ENCODE measurements at regions of chr5 and their contacts with region 1.

Region 1: DNA sequence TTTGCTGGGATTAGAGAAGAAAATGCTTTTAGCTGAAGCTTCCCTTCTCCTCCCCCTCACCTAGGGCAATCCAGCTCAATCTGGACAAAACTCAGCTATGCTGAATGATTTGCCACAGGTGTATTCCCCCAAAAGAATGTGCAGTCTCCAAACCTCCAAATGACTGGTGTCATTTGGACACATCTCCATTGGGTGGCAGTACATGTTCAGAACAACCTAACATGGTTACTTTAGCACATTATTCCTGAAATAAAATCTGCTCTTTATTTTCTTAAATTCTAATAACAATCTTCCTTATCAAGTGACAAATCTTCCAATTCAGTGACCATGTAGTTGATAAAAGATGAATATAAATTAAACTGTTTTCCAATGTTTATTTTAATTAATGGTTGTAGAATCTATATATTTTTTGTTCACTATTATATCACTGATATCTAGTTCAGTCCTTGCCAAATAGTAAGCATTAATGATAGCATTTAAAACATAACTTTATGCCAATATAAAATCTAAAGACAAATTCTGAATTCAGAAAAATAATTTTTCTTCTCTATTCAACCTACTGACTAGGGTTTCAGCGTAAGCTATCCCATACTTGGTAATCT is 61.3 kb upstream of the MOCS2 start:
- DNase-seq: peak; percentile 69
- ATAC-seq: peak; percentile 92
- H3K4me3 ChIP-seq: no peak overlapping the region
- H3K27ac ChIP-seq: 0 out of 2 replicates have a peak overlapping the region, but pooled peaks have one; percentile 9
- H3K4me1 ChIP-seq: peaks cover 9% of the 10 kb centered on the region
- H3K27me3 ChIP-seq: no peaks in the 10 kb centered on the region
- CTCF ChIP-seq: peak; percentile 83

Region 2: GRCh38 chr5:52560366-52560765 is 610.5 kb before region 1 on chr5:
- CTCF ChIA-PET with region 1: no interaction called
- POLR2A ChIA-PET with region 1: no interaction called
- intact Hi-C with region 1: loop called (anchors 1 kb)
- DNase-seq: peak; percentile 56
- ATAC-seq: peak; percentile 76
- H3K4me3 ChIP-seq: no peak overlapping the region
- H3K27ac ChIP-seq: no peak overlapping the region
- H3K4me1 ChIP-seq: no peaks in the 10 kb centered on the region
- H3K27me3 ChIP-seq: peaks cover 42% of the 10 kb centered on the region
- CTCF ChIP-seq: peak; percentile 51

Region 3: DNA sequence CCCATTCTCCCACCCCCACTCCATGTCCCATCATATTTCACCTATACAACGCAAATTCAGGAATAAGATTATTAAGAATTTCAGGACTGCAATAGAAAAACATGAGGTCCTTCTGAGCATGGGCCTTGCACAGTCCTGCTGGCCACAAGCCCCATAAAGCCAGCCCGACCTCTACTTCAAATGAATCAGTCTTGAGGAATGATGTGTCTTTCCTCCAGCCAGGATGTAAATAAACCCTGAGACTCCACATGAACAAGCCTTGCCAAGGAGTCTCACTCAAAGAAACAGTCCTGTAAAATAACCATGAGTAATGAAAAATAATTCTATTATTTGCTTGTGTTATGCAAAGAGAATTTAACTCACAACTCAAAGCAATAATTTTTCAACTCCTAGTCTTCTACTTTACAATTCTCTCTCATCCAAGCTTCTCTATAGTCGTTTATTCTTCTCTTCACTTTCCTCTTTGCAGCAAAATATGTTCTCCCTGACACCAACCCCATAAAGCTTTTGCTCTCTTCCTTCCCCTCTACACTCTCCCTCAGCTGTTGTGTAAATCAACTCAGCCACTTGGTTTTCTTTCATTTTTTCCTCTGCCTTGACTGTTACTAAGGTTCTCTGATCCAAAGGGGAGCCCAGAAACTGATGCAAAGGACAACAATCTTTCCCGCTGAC is 78.8 kb after region 1 on chr5:
- CTCF ChIA-PET with region 1: no interaction called
- POLR2A ChIA-PET with region 1: no interaction called
- intact Hi-C with region 1: loop called (anchors 2 kb)
- DNase-seq: peak; percentile 87
- ATAC-seq: peak; percentile 95
- H3K4me3 ChIP-seq: no peak overlapping the region
- H3K27ac ChIP-seq: peak overlapping the region; percentile 94
- H3K4me1 ChIP-seq: peaks cover 73% of the 10 kb centered on the region
- H3K27me3 ChIP-seq: no peaks in the 10 kb centered on the region
- CTCF ChIP-seq: no peak

Region 4: GRCh38 chr5:53368516-53368915 is 197.7 kb after region 1 on chr5:
- CTCF ChIA-PET with region 1: no interaction called
- POLR2A ChIA-PET with region 1: no interaction called
- intact Hi-C with region 1: loop called (anchors 2 kb)
- DNase-seq: peak; percentile 73
- ATAC-seq: peak; percentile 39
- H3K4me3 ChIP-seq: no peak overlapping the region
- H3K27ac ChIP-seq: peak overlapping the region; percentile 100
- H3K4me1 ChIP-seq: peaks cover 59% of the 10 kb centered on the region
- H3K27me3 ChIP-seq: no peaks in the 10 kb centered on the region
- CTCF ChIP-seq: no peak

Region 5: GRCh38 chr5:54217826-54218503 is 1047.1 kb after region 1 on chr5:
- CTCF ChIA-PET with region 1: no interaction called
- POLR2A ChIA-PET with region 1: no interaction called
- intact Hi-C with region 1: loop called (anchors 2 kb)
- DNase-seq: peak; percentile 70
- ATAC-seq: peak; percentile 74
- H3K4me3 ChIP-seq: no peak overlapping the region
- H3K27ac ChIP-seq: no peak overlapping the region
- H3K4me1 ChIP-seq: no peaks in the 10 kb centered on the region
- H3K27me3 ChIP-seq: no peaks in the 10 kb centered on the region
- CTCF ChIP-seq: peak; percentile 68

Measured in PC-3 (cell line).